ENCODE measurements at regions of chr9 and their contacts with region 1.

Region 1: DNA sequence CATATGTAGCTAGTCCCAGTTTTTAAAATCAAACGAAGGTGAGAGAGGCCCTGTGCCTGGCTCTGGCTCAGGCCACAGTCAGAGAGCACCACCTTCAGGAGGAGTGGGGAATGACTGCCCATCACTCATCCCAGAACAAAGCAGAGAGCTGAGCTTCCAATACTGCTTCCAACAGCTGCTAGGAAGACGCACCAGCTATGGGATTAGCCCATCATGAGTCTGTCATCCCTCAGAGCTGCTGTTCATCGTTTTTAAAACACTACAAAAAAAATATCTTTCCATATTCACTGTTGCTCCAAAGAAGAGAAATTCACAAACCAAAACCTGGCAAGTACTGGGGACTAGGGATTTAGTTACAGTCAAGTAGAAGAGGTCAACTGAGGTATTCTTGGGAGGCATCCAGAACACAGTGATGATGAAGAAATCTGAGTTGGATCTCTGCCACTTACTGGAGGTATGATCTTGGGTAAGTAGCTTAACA is 102.4 kb downstream of the CDK5RAP2 start:
- DNase-seq: peak; percentile 75
- H3K4me3 ChIP-seq: no peak overlapping the region
- H3K27ac ChIP-seq: no peak overlapping the region
- H3K4me1 ChIP-seq: peaks cover 13% of the 10 kb centered on the region
- H3K27me3 ChIP-seq: no peaks in the 10 kb centered on the region
- CTCF ChIP-seq: peak; percentile 93 to 96

Region 2: DNA sequence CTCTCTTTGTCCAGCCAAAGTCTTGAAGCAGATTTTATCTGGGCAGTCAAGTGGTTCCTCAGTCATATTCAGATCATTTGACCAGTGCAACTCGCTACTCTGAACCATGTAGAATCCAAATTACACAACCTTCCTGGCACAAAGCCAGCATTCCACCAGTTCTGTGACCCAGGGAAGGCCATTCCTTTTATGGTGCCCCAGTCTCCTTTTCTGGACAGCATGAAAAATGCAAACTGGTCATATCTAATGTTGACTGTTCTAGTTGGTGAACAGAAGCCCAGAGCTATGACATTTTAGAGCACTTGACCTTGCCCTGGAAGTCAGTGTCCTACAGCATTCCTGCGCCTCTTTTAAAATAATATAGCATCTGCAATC is 1473.0 kb before region 1 on chr9:
- CTCF ChIA-PET with region 1: no interaction called
- dilution Hi-C with region 1: no loop called
- in situ Hi-C with region 1: no loop called
- intact Hi-C with region 1: loop called (anchors 10 kb)
- DNase-seq: peak; percentile 57
- H3K4me3 ChIP-seq: no peak overlapping the region
- H3K27ac ChIP-seq: no peak overlapping the region
- H3K4me1 ChIP-seq: no peaks in the 10 kb centered on the region
- H3K27me3 ChIP-seq: no peaks in the 10 kb centered on the region
- CTCF ChIP-seq: no peak

Region 3: DNA sequence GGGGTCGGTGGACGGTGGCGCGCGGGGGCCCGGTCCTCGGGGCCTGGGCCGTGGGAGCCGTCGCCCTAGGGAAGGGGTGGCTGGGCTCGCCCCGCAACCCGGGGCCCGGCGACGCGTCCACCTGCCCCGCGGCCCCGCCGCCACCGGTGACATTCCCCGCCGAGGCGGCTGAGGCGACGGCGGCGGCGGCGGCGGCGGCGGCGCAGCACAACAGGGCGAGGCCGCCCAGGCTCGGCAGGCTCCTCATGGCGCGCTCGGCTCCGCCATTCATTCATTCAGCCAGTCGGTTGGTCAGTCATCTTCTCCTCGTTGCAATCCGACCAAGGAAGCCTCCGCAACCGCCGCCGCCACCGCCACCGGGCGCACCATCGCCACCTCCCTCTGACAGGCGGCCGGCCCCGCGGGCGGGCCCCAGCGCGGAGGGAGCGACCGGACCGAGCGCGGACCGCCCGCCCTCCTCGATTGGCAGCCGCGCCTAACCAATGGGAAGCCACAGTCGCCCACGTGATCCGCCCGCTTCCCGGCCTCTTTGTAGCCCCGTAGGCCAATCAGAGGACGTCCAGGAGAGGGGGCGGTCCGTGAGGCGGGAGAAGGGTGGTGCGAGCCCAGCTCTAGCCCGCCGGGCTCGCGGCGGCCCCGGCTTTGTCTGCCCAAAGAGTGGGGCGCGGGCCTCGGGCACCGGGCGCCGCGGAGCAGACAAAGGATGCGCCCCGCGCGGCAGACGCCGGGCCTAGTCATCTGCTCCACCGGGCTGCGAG is 236.7 kb after region 1 on chr9 and contains the start of gene MEGF9:
- CTCF ChIA-PET with region 1: no interaction called
- dilution Hi-C with region 1: no loop called
- in situ Hi-C with region 1: no loop called
- intact Hi-C with region 1: no loop called
- DNase-seq: peak; percentile 97
- H3K4me3 ChIP-seq: peak within 1 kb of the TSS; percentile 85 to 90 (median 89)
- H3K27ac ChIP-seq: peak within 1 kb of the TSS; percentile 57
- H3K4me1 ChIP-seq: peaks cover 27% of the 10 kb centered on the region
- H3K27me3 ChIP-seq: no peaks in the 10 kb centered on the region
- CTCF ChIP-seq: no peak
- total RNA-seq, gene MEGF9: 10.9 to 31.5 TPM